ENCODE measurements at regions of chr6 and their contacts with region 1.

Region 1: GRCh38 chr6:137102851-137103492 is 58.2 kb upstream of the IL20RA start:
- DNase-seq: peak; percentile 96
- H3K4me3 ChIP-seq: peak overlapping the region; percentile 53
- H3K27ac ChIP-seq: peak overlapping the region; percentile 95
- H3K4me1 ChIP-seq: peaks cover 75% of the 10 kb centered on the region
- CTCF ChIP-seq: no peak

Region 2: DNA sequence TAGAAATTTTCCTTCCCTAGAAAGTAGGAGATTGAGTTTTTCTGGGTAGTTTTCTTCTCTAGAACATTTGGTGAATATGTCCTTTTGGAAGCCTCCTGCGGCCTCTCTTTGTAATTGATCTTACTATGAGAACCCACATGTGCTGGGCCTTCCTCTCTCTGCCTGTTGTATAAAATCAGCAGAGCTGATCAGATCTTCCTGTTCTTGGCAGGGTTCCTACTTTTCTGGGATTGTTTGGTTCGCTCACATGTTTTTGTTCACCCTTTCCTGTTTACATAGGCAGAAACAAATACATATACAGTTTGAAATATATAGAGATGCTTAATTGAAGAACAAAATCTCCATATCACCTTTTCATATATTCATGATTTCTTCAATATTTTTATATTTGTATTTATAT is 12.7 kb after region 1 on chr6:
- CTCF ChIA-PET with region 1: no interaction called
- POLR2A ChIA-PET with region 1: interaction called, 13 read pairs
- intact Hi-C with region 1: no loop called
- DNase-seq: no peak
- H3K4me3 ChIP-seq: no peak overlapping the region
- H3K27ac ChIP-seq: no peak overlapping the region
- H3K4me1 ChIP-seq: no peaks in the 10 kb centered on the region
- CTCF ChIP-seq: no peak

Region 3: GRCh38 chr6:137148306-137149034 is 45.5 kb after region 1 on chr6:
- CTCF ChIA-PET with region 1: no interaction called
- POLR2A ChIA-PET with region 1: interaction called, 6 read pairs
- intact Hi-C with region 1: loop called (anchors 2 kb)
- DNase-seq: no peak
- H3K4me3 ChIP-seq: no peak overlapping the region
- H3K27ac ChIP-seq: no peak overlapping the region
- H3K4me1 ChIP-seq: peaks cover 19% of the 10 kb centered on the region
- CTCF ChIP-seq: no peak

Region 4: GRCh38 chr6:137218917-137219663 is 116.1 kb after region 1 on chr6 and contains the start of gene IFNGR1:
- CTCF ChIA-PET with region 1: interaction called, 3 read pairs
- POLR2A ChIA-PET with region 1: interaction called, 3 read pairs
- intact Hi-C with region 1: loop called (anchors 2 kb)
- DNase-seq: peak; percentile 93
- H3K4me3 ChIP-seq: peak within 1 kb of the TSS; percentile 90
- H3K27ac ChIP-seq: peak within 1 kb of the TSS; percentile 59
- H3K4me1 ChIP-seq: peaks cover 69% of the 10 kb centered on the region
- CTCF ChIP-seq: no peak
- total RNA-seq, gene IFNGR1: 23.2 and 25.6 TPM in 2 replicates

Region 5: DNA sequence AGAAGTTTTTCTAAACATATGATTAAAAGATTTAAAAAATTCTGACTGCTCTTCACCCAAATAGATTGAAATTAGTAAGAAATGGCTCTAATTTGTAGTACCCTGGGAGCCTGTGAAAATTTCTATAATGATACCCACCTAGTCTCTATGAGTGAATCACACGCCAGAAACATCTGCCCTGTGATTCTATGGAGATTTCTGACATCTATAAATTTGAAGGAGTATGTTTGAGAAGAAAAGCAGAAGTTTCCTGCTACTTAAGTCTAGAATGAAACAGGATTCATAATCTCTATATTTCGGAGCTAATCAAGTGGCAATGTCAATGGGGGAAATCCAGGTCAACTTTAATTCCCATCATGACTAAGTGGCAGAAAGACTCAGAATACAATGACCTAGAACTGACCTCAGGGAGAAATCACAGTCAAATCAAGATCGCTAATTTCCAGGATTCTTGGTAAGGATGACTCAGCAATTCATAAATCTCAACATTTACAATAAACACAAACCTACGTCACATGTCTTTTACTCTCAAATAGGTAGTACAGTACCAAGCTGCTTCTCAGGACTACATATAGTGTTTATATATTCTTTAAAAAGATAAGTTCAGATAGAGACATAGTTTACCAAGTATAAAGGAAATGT is 577.9 kb after region 1 on chr6:
- CTCF ChIA-PET with region 1: no interaction called
- POLR2A ChIA-PET with region 1: no interaction called
- intact Hi-C with region 1: no loop called
- DNase-seq: no peak
- H3K4me3 ChIP-seq: no peak overlapping the region
- H3K27ac ChIP-seq: no peak overlapping the region
- H3K4me1 ChIP-seq: peaks cover 6% of the 10 kb centered on the region
- CTCF ChIP-seq: no peak